Activated CD4-positive, alpha-beta T cell treated with anti-CD3 and anti-CD28 coated beads, Interleukin-2, amount 10 ng/mL, durations not matched to agents 24 days and 14 days (primary cell): ENCODE measurements at regions of chr7 and their contacts with region 1.

Region 1: GRCh38 chr7:55255496-55256435 is 109.4 kb upstream of the LANCL2 start:
- DNase-seq: peak; percentile 92
- H3K4me3 Mint-ChIP-seq: peak overlapping the region; percentile 90
- H3K27ac Mint-ChIP-seq: peak overlapping the region; percentile 58
- H3K4me1 Mint-ChIP-seq: peaks cover 8% of the 10 kb centered on the region
- H3K27me3 Mint-ChIP-seq: peaks cover 47% of the 10 kb centered on the region

Region 2: GRCh38 chr7:54773472-54774399 is 482.0 kb before region 1 on chr7:
- intact Hi-C with region 1: loop called (anchors 1 kb)
- DNase-seq: peak; percentile 91
- H3K4me3 Mint-ChIP-seq: peak overlapping the region; percentile 79
- H3K27ac Mint-ChIP-seq: no peak overlapping the region
- H3K4me1 Mint-ChIP-seq: peaks cover 9% of the 10 kb centered on the region
- H3K27me3 Mint-ChIP-seq: peaks cover 39% of the 10 kb centered on the region

Region 3: DNA sequence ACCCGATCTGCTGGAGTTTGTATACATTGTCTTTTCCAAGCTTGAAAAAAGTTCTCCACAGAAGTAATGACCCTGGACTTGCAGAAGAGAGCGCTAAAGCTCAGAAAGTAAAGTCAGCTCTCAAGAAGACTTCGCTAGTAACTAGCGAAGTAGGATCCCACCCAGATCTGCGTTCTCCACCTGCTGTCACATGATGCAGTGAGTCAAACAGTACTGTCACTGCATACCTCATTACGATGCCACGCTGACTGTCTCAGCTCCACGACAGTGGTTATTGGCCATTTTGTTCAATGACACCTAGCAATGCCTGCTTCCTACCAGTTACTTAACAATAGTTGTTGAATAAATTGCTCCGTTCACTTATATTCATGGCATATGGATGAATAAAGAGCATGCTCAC is 467.1 kb before region 1 on chr7:
- intact Hi-C with region 1: loop called (anchors 1 kb)
- DNase-seq: peak; percentile 62
- H3K4me3 Mint-ChIP-seq: no peak overlapping the region
- H3K27ac Mint-ChIP-seq: no peak overlapping the region
- H3K4me1 Mint-ChIP-seq: peaks cover 5% of the 10 kb centered on the region
- H3K27me3 Mint-ChIP-seq: peaks cover 25% of the 10 kb centered on the region

Region 4: GRCh38 chr7:54877683-54878082 is 378.1 kb before region 1 on chr7:
- intact Hi-C with region 1: loop called (anchors 10 kb)
- DNase-seq: no peak
- H3K4me3 Mint-ChIP-seq: no peak overlapping the region
- H3K27ac Mint-ChIP-seq: no peak overlapping the region
- H3K4me1 Mint-ChIP-seq: no peaks in the 10 kb centered on the region
- H3K27me3 Mint-ChIP-seq: no peaks in the 10 kb centered on the region

Region 5: GRCh38 chr7:55073945-55074499 is 181.7 kb before region 1 on chr7:
- intact Hi-C with region 1: no loop called
- DNase-seq: peak; percentile 77
- H3K4me3 Mint-ChIP-seq: peak overlapping the region; percentile 59
- H3K27ac Mint-ChIP-seq: peak overlapping the region; percentile 64
- H3K4me1 Mint-ChIP-seq: peaks cover 15% of the 10 kb centered on the region
- H3K27me3 Mint-ChIP-seq: peaks cover 12% of the 10 kb centered on the region

Region 6: DNA sequence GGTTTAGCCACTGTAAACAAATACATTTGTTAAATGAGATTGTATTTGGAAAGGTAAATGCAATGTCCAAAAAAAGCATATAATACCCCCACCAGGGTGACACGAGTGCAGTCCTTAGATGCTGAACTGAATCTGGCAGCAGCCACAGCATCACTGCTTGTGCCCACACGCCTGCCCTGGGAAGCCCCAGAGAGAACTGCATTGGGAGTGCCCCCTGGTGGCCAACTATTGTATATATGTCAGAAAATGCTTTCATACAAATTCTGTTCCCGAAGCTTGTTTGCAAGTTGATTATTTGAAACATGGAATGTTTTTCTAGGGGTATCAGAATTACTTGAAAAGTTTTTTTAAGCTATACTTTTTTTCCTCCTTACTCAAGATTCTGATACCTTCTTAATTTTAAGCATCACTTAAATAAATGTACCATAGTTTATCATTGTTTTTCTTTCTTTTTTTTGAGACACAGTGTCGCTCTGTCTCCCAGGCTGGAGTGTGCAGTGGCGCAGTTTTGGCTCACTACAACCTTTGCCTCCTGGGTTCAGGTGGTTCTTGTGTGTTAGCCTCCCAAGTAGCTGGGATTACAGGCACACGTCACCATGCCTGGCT is 159.5 kb after region 1 on chr7:
- intact Hi-C with region 1: loop called (anchors 1 kb)
- DNase-seq: peak; percentile 93
- H3K4me3 Mint-ChIP-seq: no peak overlapping the region
- H3K27ac Mint-ChIP-seq: no peak overlapping the region
- H3K4me1 Mint-ChIP-seq: peaks cover 2% of the 10 kb centered on the region
- H3K27me3 Mint-ChIP-seq: no peaks in the 10 kb centered on the region